ENCODE measurements at regions of chr14 and their contacts with region 1.

Region 1: DNA sequence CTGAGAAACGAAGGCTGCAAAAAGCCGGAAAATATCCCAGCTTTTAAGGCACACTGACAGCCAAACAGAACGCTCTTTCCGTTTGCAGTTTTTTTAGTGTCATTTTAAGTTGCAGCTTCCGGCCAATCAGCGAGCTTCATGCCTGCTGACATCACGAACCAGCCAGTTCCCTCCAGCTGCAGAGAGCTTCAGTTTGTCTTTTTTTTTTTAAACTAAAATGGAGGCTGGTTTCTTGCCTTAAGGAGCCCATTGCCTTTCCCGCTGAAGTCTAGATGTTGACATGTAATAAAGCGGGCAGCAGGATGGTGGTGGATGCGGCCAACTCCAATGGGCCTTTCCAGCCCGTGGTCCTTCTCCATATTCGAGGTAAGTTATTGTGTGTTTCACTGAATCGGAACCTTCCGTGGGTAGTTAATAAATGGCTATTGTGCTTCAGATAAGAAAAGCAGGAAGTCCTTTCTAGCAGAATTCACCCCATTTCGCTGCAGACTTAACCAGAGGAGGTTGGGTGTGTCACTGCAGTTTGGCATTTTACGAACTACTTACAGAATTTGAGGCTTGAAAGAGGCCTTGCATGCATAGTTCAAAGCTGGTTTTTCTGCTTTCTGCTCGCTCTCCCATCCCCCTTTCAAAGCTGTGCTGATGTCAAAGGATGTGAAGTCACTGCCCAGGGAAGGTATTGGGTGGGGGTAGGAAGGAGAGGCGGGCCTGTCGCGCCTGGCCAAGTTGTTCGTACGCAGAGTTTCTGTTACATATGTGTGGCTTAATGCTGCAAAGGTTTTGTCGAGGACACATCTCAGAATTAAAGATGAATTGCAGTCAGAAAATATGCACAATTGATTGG is 48.4 kb downstream of the PPP2R5C start:
- H3K4me3 Mint-ChIP-seq: peak overlapping the region; percentile 88
- H3K27ac Mint-ChIP-seq: peak overlapping the region; percentile 99
- H3K4me1 Mint-ChIP-seq: peaks cover 38% of the 10 kb centered on the region
- H3K27me3 Mint-ChIP-seq: no peaks in the 10 kb centered on the region

Region 2: DNA sequence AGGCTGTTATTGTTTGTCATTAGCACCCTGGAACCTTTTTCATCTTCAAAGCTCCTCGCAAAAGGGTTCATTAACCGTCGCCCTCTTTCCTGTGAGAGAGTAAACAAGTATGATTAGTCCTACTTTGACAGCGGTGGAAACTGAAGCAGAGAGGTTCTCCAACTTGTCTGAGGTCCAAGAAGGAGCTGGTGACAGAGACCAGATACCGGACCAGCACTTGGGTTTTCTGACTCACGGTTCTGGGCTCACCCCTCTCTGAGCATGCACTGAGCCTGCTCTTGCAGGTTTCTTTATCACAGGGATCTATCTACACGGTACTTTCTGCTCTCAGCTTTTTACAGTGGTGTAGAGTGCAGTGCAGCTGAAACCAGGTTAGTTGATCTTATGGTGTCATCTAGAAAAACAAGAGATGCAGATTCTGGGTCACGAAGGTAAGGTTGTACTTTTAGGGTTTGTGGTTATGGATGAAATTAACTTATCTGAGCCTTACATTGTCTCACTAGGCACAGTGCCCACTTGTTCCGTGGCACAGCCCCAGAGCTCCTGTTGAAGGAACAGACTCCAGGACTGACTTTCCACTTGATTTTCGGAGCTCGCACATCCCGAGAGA is 13.7 kb after region 1 on chr14:
- intact Hi-C with region 1: loop called (anchors 1 kb)
- H3K4me3 Mint-ChIP-seq: no peak overlapping the region
- H3K27ac Mint-ChIP-seq: peak overlapping the region; percentile 98
- H3K4me1 Mint-ChIP-seq: peaks cover 79% of the 10 kb centered on the region
- H3K27me3 Mint-ChIP-seq: no peaks in the 10 kb centered on the region

Region 3: GRCh38 chr14:101876555-101876938 is 66.7 kb after region 1 on chr14:
- intact Hi-C with region 1: loop called (anchors 1 kb)
- H3K4me3 Mint-ChIP-seq: no peak overlapping the region
- H3K27ac Mint-ChIP-seq: peak overlapping the region; percentile 67
- H3K4me1 Mint-ChIP-seq: peaks cover 60% of the 10 kb centered on the region
- H3K27me3 Mint-ChIP-seq: no peaks in the 10 kb centered on the region

Region 4: GRCh38 chr14:102125546-102125945 is 315.7 kb after region 1 on chr14:
- intact Hi-C with region 1: no loop called
- H3K4me3 Mint-ChIP-seq: no peak overlapping the region
- H3K27ac Mint-ChIP-seq: no peak overlapping the region
- H3K4me1 Mint-ChIP-seq: no peaks in the 10 kb centered on the region
- H3K27me3 Mint-ChIP-seq: no peaks in the 10 kb centered on the region

Measured in dendritic cell treated with granulocyte-macrophage colony-stimulating factor and Interleukin-4, amounts not matched to agents 40 ng/mL and 50 ng/mL, for 4 days (primary cell).